ENCODE measurements at regions of chr1 and their contacts with region 1.

Region 1: DNA sequence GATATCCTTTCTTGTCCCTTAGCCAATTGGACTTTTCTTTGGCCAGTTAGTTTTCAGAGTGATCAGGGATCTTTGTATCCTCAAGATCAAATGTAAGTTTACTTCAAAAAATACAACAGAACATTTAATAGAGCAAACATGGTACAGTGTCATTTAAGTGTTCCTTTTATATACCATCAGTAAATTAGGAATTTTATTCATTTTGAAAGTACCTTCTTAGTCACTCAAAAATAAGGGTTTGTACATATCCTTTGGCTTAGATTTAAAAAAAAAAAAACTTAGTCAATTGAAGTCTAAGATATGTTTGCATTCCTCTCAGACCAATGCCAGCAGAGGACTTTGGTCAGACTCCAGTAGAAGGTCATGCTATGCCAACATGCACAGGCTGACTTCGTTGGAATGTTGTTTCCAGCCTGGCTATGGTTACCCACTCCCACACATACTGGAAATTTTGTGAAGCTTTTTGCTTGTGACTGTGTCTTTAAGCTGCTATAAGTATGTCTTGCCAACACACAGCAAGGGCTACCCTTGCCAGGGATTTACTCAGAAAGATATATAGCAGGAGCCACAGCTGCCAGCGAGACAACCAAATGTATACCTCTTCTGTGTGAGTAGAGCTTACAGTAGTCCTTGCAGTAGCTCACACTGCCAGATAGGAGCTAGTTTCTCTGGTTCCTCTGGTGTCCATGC is 81.5 kb upstream of the LRIF1 start:
- DNase-seq: no peak
- H3K4me3 ChIP-seq: no peak overlapping the region
- H3K4me3 Mint-ChIP-seq: no peak overlapping the region
- H3K27ac ChIP-seq: no peak overlapping the region
- H3K27ac Mint-ChIP-seq: no peak overlapping the region
- H3K4me1 ChIP-seq: no peaks in the 10 kb centered on the region
- H3K4me1 Mint-ChIP-seq: no peaks in the 10 kb centered on the region
- H3K27me3 ChIP-seq: peaks cover 23 to 33% of the 10 kb centered on the region in 2 donors
- H3K27me3 Mint-ChIP-seq: peaks cover 12 to 42% (median 37%) of the 10 kb centered on the region in 3 donors
- CTCF ChIP-seq: no peak

Region 2: DNA sequence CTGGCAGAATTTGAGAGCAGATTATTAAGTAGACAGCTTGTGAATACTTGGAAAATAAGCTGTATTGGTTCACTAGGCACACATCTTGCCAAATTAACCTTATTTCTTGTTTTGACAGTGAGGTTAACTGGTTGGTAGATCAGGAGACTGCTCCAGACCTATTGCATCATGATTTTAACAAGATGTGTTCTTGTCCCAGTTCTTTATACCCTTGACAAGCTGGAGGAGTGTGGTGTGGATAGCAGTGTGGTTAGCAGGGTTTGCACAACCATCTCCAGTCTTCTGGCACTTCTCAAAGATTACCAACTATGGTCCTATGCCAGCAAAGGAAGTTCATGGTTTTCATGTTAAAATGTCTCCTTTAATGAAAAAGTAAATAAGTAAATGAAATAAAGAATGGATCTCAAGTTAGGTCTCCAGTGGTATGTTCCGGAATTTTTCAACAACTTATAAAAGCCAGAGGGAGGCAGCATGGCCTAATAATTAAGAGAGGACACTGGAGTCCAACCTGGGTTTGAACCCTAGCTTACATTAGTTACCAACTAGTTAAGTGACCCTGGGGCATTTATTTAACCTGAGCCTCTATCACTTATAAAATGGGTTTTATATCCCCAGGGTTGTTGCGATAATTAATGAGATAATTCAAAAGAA is 744.6 kb after region 1 on chr1:
- intact Hi-C with region 1: loop called in 1 of 2 experiments (anchors 5 kb)
- DNase-seq: no peak
- H3K4me3 ChIP-seq: no peak overlapping the region
- H3K4me3 Mint-ChIP-seq: no peak overlapping the region
- H3K27ac ChIP-seq: no peak overlapping the region
- H3K27ac Mint-ChIP-seq: no peak overlapping the region
- H3K4me1 ChIP-seq: no peaks in the 10 kb centered on the region
- H3K4me1 Mint-ChIP-seq: peaks cover 5% of the 10 kb centered on the region
- H3K27me3 ChIP-seq: peaks cover 0 to 4% of the 10 kb centered on the region in 2 donors
- H3K27me3 Mint-ChIP-seq: peaks cover 9 to 18% (median 9%) of the 10 kb centered on the region in 3 donors
- CTCF ChIP-seq: no peak